Gastrocnemius medialis (tissue), 4 donors: ENCODE measurements at regions of chr7 and their contacts with region 1.

Region 1: GRCh38 chr7:26686448-26686981 is 177.9 kb downstream of the SKAP2 start:
- DNase-seq: no peak
- ATAC-seq: no peak
- H3K4me3 ChIP-seq: no peak overlapping the region
- H3K27ac ChIP-seq: no peak overlapping the region
- H3K4me1 ChIP-seq: peaks cover 0 to 6% of the 10 kb centered on the region in 2 donors
- H3K27me3 ChIP-seq: no peaks in the 10 kb centered on the region
- CTCF ChIP-seq: peak; percentile 51 to 73 (median 57)
- POLR2A ChIP-seq: no peak

Region 2: GRCh38 chr7:26466969-26467529 is 219.5 kb before region 1 on chr7:
- in situ Hi-C with region 1: no loop called
- intact Hi-C with region 1: no loop called
- DNase-seq: no peak
- ATAC-seq: no peak
- H3K4me3 ChIP-seq: no peak overlapping the region
- H3K27ac ChIP-seq: no peak overlapping the region
- H3K4me1 ChIP-seq: no peaks in the 10 kb centered on the region
- H3K27me3 ChIP-seq: no peaks in the 10 kb centered on the region
- CTCF ChIP-seq: no peak
- POLR2A ChIP-seq: no peak

Region 3: GRCh38 chr7:27143023-27143949 is 456.8 kb after region 1 on chr7 and contains the start of gene HOXA5:
- in situ Hi-C with region 1: loop called in 1 of 4 experiments (anchors 5 kb)
- intact Hi-C with region 1: no loop called
- DNase-seq: peak; percentile 76 to 80
- ATAC-seq: peak; percentile 82 to 95
- H3K4me3 ChIP-seq: peak within 1 kb of the TSS; percentile 56 to 68 (median 62)
- H3K27ac ChIP-seq: peak within 1 kb of the TSS; percentile 79 to 94 (median 88)
- H3K4me1 ChIP-seq: peaks cover 18 to 24% of the 10 kb centered on the region in 2 donors
- H3K27me3 ChIP-seq: no peaks in the 10 kb centered on the region
- CTCF ChIP-seq: peak in 4 of 5 experiments; percentile 77 to 90 (median 86)
- POLR2A ChIP-seq: peak; percentile 57 to 83
- total RNA-seq, gene HOXA5: 2.7 to 7.1 (median 7.0) TPM

Region 4: GRCh38 chr7:27398851-27399250 is 712.3 kb after region 1 on chr7:
- in situ Hi-C with region 1: no loop called
- intact Hi-C with region 1: no loop called
- DNase-seq: no peak
- ATAC-seq: no peak
- H3K4me3 ChIP-seq: no peak overlapping the region
- H3K27ac ChIP-seq: no peak overlapping the region
- H3K4me1 ChIP-seq: no peaks in the 10 kb centered on the region
- H3K27me3 ChIP-seq: no peaks in the 10 kb centered on the region
- CTCF ChIP-seq: no peak
- POLR2A ChIP-seq: no peak